Pancreas (tissue), 10 donors: ENCODE measurements at regions of chr2 and their contacts with region 1.

Region 1: GRCh38 chr2:211026119-211026518 is 469.7 kb downstream of the CPS1 start:
- DNase-seq: no peak
- ATAC-seq: no peak
- H3K4me3 ChIP-seq: no peak overlapping the region
- H3K27ac ChIP-seq: no peak overlapping the region
- H3K4me1 ChIP-seq: no peaks in the 10 kb centered on the region
- H3K27me3 ChIP-seq: no peaks in the 10 kb centered on the region
- CTCF ChIP-seq: no peak

Region 2: DNA sequence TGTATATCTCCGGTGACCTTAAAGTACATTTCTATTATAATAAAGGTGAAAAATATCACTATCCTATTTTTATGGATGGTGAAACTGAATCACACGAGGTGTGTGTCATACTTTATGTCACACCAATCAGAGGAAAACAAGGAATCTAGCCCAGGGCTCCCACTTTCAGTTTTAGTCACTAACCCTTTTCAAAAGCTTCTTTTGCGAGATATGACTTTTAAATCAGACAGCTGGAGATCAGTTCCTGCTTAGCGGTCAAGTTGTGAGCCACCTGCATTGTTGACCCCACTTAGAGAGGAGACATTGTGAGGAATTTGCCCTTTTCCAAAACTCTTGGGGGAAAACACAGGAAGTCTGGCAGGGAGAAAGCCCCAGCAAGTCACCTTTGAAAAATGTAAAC is 399.3 kb before region 1 on chr2:
- intact Hi-C with region 1: loop called in 1 of 3 experiments (anchors 10 kb)
- DNase-seq: no peak
- ATAC-seq: no peak
- H3K4me3 ChIP-seq: no peak overlapping the region
- H3K27ac ChIP-seq: no peak overlapping the region
- H3K4me1 ChIP-seq: no peaks in the 10 kb centered on the region
- H3K27me3 ChIP-seq: no peaks in the 10 kb centered on the region
- CTCF ChIP-seq: no peak

Region 3: GRCh38 chr2:210833403-210833802 is 192.7 kb before region 1 on chr2:
- intact Hi-C with region 1: no loop called
- DNase-seq: no peak
- ATAC-seq: no peak
- H3K4me3 ChIP-seq: no peak overlapping the region
- H3K27ac ChIP-seq: no peak overlapping the region
- H3K4me1 ChIP-seq: no peaks in the 10 kb centered on the region
- H3K27me3 ChIP-seq: no peaks in the 10 kb centered on the region
- CTCF ChIP-seq: no peak

Region 4: GRCh38 chr2:211055438-211055837 is 29.3 kb after region 1 on chr2:
- intact Hi-C with region 1: no loop called
- DNase-seq: no peak
- ATAC-seq: no peak
- H3K4me3 ChIP-seq: no peak overlapping the region
- H3K27ac ChIP-seq: no peak overlapping the region
- H3K4me1 ChIP-seq: no peaks in the 10 kb centered on the region
- H3K27me3 ChIP-seq: no peaks in the 10 kb centered on the region
- CTCF ChIP-seq: no peak

Region 5: GRCh38 chr2:211447548-211447947 is 421.4 kb after region 1 on chr2:
- intact Hi-C with region 1: no loop called
- DNase-seq: no peak
- ATAC-seq: no peak
- H3K4me3 ChIP-seq: no peak overlapping the region
- H3K27ac ChIP-seq: no peak overlapping the region
- H3K4me1 ChIP-seq: no peaks in the 10 kb centered on the region
- H3K27me3 ChIP-seq: no peaks in the 10 kb centered on the region
- CTCF ChIP-seq: no peak